Ascending aorta (tissue), 2 donors: ENCODE measurements at regions of chr4 and their contacts with region 1.

Region 1: GRCh38 chr4:187606581-187606980 is 389.0 kb upstream of the ZFP42 start:
- DNase-seq: no peak
- H3K4me3 ChIP-seq: no peak overlapping the region
- H3K27ac ChIP-seq: no peak overlapping the region
- H3K4me1 ChIP-seq: peaks cover 0 to 6% of the 10 kb centered on the region in 2 donors
- H3K27me3 ChIP-seq: no peaks in the 10 kb centered on the region
- CTCF ChIP-seq: peak; percentile 41 to 83 (median 66)

Region 2: GRCh38 chr4:188372826-188373225 is 766.2 kb after region 1 on chr4:
- intact Hi-C with region 1: loop called (anchors 2 kb)
- DNase-seq: peak in 1 of 2 donors; percentile 70
- H3K4me3 ChIP-seq: no peak overlapping the region
- H3K27ac ChIP-seq: no peak overlapping the region
- H3K4me1 ChIP-seq: no peaks in the 10 kb centered on the region
- H3K27me3 ChIP-seq: no peaks in the 10 kb centered on the region
- CTCF ChIP-seq: peak in 2 of 3 experiments; percentile 43 to 52

Region 3: GRCh38 chr4:189124149-189124758 is 1517.7 kb after region 1 on chr4:
- intact Hi-C with region 1: loop called (anchors 5 kb)
- DNase-seq: no peak
- H3K4me3 ChIP-seq: no peak overlapping the region
- H3K27ac ChIP-seq: no peak overlapping the region
- H3K4me1 ChIP-seq: no peaks in the 10 kb centered on the region
- H3K27me3 ChIP-seq: no peaks in the 10 kb centered on the region
- CTCF ChIP-seq: peak in 1 of 3 experiments; percentile 54

Region 4: DNA sequence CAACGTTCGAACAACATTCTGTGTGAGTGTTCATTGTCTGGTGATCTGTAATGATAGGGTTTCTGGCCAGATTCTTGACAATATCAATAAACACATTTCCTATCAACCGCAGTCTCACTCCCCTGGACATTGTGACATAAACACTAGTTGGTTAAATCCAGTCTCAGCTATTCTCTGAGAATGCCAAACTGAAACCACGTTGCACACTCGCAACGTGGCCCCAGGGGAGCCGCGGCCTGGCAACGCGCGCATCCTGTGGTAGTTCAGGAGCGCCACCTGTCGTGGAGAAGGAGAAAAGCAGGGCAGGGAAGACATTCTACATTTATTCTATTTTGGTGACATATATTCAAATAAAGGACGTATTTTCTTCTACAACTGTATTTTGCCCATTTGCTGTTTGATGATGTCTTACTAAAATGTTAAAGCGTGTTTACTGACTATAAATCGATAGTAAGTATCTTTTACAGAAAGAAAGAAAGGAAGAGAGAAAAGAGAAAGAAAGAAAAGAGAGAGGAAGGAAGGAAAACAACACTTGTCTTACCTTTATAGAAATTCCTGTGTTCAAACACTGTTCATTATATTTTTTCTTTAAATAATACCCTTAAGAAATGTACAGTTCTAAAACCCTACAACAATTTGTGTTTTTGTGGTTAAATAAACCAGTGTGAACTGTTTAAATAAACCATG is 1595.7 kb after region 1 on chr4:
- intact Hi-C with region 1: loop called (anchors 5 kb)
- DNase-seq: peak in 1 of 2 donors; percentile 75
- H3K4me3 ChIP-seq: peak overlapping the region; percentile 6 to 55
- H3K27ac ChIP-seq: no peak overlapping the region
- H3K4me1 ChIP-seq: peaks cover 0 to 4% of the 10 kb centered on the region in 2 donors
- H3K27me3 ChIP-seq: no peaks in the 10 kb centered on the region
- CTCF ChIP-seq: peak; percentile 10 to 82 (median 74)